HepG2 (cell line): ENCODE measurements at regions of chr12 and their contacts with region 1.

Region 1: GRCh38 chr12:40622246-40622838 is 69.9 kb upstream of the CNTN1 start:
- DNase-seq: peak; percentile 19
- ATAC-seq: peak; percentile 44; the same call in 2 of the 3 replicates
- H3K4me3 ChIP-seq: no peak overlapping the region
- H3K27ac ChIP-seq: no peak overlapping the region
- H3K4me1 ChIP-seq: no peaks in the 10 kb centered on the region
- H3K27me3 ChIP-seq: no peaks in the 10 kb centered on the region
- CTCF ChIP-seq: peak; percentile 58
- EP300 ChIP-seq: no peak
- POLR2A ChIP-seq: no peak
- RAD21 ChIP-seq: no peak

Region 2: GRCh38 chr12:40045656-40046055 is 576.7 kb before region 1 on chr12:
- CTCF ChIA-PET with region 1: no interaction called
- POLR2A ChIA-PET with region 1: no interaction called
- in situ Hi-C with region 1: no loop called
- intact Hi-C with region 1: no loop called
- DNase-seq: no peak
- ATAC-seq: no peak
- H3K4me3 ChIP-seq: no peak overlapping the region
- H3K27ac ChIP-seq: no peak overlapping the region
- H3K4me1 ChIP-seq: no peaks in the 10 kb centered on the region
- H3K27me3 ChIP-seq: no peaks in the 10 kb centered on the region; a peak in 1 of 5 replicates
- CTCF ChIP-seq: no peak
- EP300 ChIP-seq: no peak
- POLR2A ChIP-seq: no peak
- RAD21 ChIP-seq: no peak

Region 3: GRCh38 chr12:40689576-40689975 is 67.2 kb after region 1 on chr12:
- CTCF ChIA-PET with region 1: no interaction called
- POLR2A ChIA-PET with region 1: no interaction called
- in situ Hi-C with region 1: no loop called
- intact Hi-C with region 1: no loop called
- DNase-seq: no peak
- ATAC-seq: no peak
- H3K4me3 ChIP-seq: no peak overlapping the region
- H3K27ac ChIP-seq: no peak overlapping the region
- H3K4me1 ChIP-seq: no peaks in the 10 kb centered on the region
- H3K27me3 ChIP-seq: no peaks in the 10 kb centered on the region
- CTCF ChIP-seq: no peak
- EP300 ChIP-seq: no peak
- POLR2A ChIP-seq: no peak
- RAD21 ChIP-seq: no peak

Region 4: GRCh38 chr12:40701756-40702155 is 79.4 kb after region 1 on chr12:
- CTCF ChIA-PET with region 1: no interaction called
- POLR2A ChIA-PET with region 1: no interaction called
- in situ Hi-C with region 1: no loop called
- intact Hi-C with region 1: loop called (anchors 2 kb)
- DNase-seq: no peak
- ATAC-seq: no peak
- H3K4me3 ChIP-seq: no peak overlapping the region
- H3K27ac ChIP-seq: no peak overlapping the region
- H3K4me1 ChIP-seq: no peaks in the 10 kb centered on the region
- H3K27me3 ChIP-seq: no peaks in the 10 kb centered on the region
- CTCF ChIP-seq: no peak
- EP300 ChIP-seq: no peak
- POLR2A ChIP-seq: no peak
- RAD21 ChIP-seq: no peak